Adrenal gland (tissue), 19 donors: ENCODE measurements at regions of chrX and their contacts with region 1.

Region 1: GRCh38 chrX:94813541-94813940 is 1139.5 kb downstream of the FAM133A start:
- DNase-seq: no peak
- H3K4me3 ChIP-seq: no peak overlapping the region
- H3K27ac ChIP-seq: no peak overlapping the region
- H3K4me1 ChIP-seq: no peaks in the 10 kb centered on the region
- H3K27me3 ChIP-seq: peaks cover 3% of the 10 kb centered on the region
- CTCF ChIP-seq: no peak
- POLR2A ChIP-seq: no peak

Region 2: GRCh38 chrX:94633237-94633636 is 180.3 kb before region 1 on chrX:
- intact Hi-C with region 1: no loop called
- DNase-seq: no peak
- H3K4me3 ChIP-seq: no peak overlapping the region
- H3K27ac ChIP-seq: no peak overlapping the region
- H3K4me1 ChIP-seq: no peaks in the 10 kb centered on the region
- H3K27me3 ChIP-seq: peaks cover 8% of the 10 kb centered on the region
- CTCF ChIP-seq: no peak
- POLR2A ChIP-seq: no peak

Region 3: GRCh38 chrX:94743478-94743877 is 70.1 kb before region 1 on chrX:
- intact Hi-C with region 1: loop called in 1 of 2 experiments (anchors 10 kb)
- DNase-seq: no peak
- H3K4me3 ChIP-seq: no peak overlapping the region
- H3K27ac ChIP-seq: no peak overlapping the region
- H3K4me1 ChIP-seq: no peaks in the 10 kb centered on the region
- H3K27me3 ChIP-seq: peaks cover 3% of the 10 kb centered on the region
- CTCF ChIP-seq: no peak
- POLR2A ChIP-seq: no peak

Region 4: GRCh38 chrX:94901849-94902248 is 88.3 kb after region 1 on chrX:
- intact Hi-C with region 1: no loop called
- DNase-seq: no peak
- H3K4me3 ChIP-seq: no peak overlapping the region
- H3K27ac ChIP-seq: no peak overlapping the region
- H3K4me1 ChIP-seq: no peaks in the 10 kb centered on the region
- H3K27me3 ChIP-seq: peaks cover 5% of the 10 kb centered on the region
- CTCF ChIP-seq: no peak
- POLR2A ChIP-seq: no peak

Region 5: GRCh38 chrX:95040104-95040503 is 226.6 kb after region 1 on chrX:
- intact Hi-C with region 1: no loop called
- DNase-seq: no peak
- H3K4me3 ChIP-seq: no peak overlapping the region
- H3K27ac ChIP-seq: no peak overlapping the region
- H3K4me1 ChIP-seq: no peaks in the 10 kb centered on the region
- H3K27me3 ChIP-seq: no peaks in the 10 kb centered on the region
- CTCF ChIP-seq: no peak
- POLR2A ChIP-seq: no peak